Heart left ventricle (tissue), 16 donors: ENCODE measurements at regions of chr22 and their contacts with region 1.

Region 1: DNA sequence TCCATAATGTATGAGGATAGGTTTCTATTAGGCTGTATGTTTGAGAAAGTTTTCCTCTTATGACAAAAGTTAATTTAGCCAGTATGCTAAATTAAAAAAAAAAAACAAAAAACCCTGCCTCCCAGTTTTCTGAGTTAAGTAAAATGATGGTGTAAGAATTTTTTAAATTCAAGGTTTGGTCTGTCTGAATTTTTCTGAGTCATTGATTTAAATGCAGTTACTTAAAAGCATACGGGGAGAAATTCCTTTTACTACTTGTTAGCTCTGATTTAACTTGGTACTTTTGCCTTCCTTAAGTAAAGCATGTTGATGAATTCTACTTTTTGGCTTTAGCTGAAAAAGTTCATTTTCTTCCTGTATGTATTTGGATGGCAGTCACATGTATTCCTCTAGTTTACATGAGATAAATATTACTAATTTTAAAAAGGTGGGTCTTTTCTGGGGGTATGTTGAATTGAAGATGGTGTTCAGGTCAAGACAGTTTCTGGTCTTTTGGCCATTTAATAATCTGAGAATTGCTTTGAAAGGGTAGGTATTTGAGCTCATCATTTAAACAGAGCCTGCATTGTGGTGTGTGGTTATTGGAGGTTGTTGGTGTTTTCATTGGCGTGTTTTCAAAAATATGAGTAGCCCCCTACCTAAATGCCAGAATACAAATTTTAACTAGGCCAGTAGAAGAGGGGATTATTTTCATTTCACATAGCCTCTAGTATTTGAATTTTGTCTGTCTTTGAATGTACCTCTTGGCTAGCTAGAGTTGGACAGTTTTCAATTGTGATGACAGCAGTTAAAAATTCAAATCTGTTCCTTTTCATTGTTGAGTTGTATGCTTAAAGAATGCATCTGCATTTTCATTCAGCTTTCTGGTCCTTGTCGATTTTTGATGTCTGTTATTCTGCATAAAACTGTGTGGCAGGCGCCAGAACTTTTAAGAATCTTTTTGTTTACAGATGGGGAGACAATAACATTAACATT is 64.7 kb downstream of the MTMR3 start:
- DNase-seq: no peak
- ATAC-seq: peak in 1 of 4 donors; percentile 44
- H3K4me3 ChIP-seq: no peak overlapping the region
- H3K27ac ChIP-seq: peak overlapping the region in 3 of 12 donors; percentile 5 to 25 (median 16)
- H3K4me1 ChIP-seq: peaks cover 0 to 74% (median 59%) of the 10 kb centered on the region in 12 donors
- H3K27me3 ChIP-seq: no peaks in the 10 kb centered on the region
- CTCF ChIP-seq: no peak
- POLR2A ChIP-seq: no peak

Region 2: DNA sequence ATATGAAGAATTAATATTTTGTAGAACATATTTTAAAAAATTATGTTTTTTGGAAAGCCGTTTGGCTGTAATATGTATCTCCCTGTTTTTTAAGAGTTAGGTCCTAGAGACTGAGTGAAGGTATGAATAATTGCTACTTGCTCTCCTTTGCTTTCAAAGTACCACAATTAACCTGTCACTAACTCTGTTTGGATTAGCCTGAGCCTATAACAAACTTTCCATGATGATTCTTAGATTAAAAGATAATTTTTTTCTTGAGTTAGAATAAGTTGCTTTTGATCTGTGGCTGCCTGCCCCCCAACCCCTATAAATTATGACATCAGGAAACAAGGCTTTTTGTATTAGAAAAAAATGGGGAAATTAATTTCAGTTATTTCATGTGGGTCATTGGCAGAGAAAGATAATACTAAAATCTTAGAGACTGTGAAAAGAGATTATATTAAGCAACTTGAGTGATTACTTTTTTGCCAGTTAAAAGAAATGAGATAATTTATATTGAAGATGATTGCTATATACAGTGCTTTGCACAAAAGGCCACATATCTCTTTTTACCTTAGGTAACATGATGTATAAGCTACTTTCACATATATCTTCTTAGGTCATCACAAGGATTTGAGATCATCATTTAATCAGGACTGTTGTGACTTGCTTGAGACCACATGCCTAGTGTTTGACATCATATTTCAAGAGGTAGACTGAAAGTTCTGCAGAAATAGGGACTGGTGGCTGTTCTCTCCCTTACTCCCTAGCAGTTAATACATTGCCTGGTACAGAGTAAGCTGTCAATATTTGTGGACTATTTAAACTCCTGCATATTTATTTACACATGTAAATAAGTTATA is 55.2 kb before region 1 on chr22:
- intact Hi-C with region 1: loop called in 3 of 10 experiments (anchors 10 kb)
- DNase-seq: no peak
- ATAC-seq: no peak
- H3K4me3 ChIP-seq: no peak overlapping the region
- H3K27ac ChIP-seq: no peak overlapping the region
- H3K4me1 ChIP-seq: peaks cover 0 to 52% (median 32%) of the 10 kb centered on the region in 12 donors
- H3K27me3 ChIP-seq: no peaks in the 10 kb centered on the region
- CTCF ChIP-seq: no peak
- POLR2A ChIP-seq: no peak

Region 3: DNA sequence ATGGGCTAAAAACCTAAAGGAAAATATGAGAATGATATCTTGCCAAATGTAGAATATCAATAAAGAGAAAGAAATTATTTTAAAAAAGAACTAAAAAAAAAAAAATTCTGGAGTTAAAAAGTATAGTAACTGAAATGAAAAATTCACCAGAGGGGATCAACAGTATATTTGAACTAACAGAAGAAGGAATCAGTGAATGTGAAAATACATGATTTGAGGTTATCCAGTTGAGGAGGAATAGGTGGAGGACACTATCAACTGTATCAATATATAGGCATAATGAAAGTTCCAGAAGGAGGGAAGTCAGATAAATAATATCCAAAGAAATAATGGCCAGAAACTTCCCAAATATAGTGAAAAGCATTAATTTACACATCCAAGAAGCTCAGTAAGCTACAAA is 116.5 kb after region 1 on chr22:
- intact Hi-C with region 1: no loop called
- DNase-seq: no peak
- ATAC-seq: no peak
- H3K4me3 ChIP-seq: no peak overlapping the region
- H3K27ac ChIP-seq: no peak overlapping the region
- H3K4me1 ChIP-seq: no peaks in the 10 kb centered on the region
- H3K27me3 ChIP-seq: peaks cover 0 to 1% (median 0%) of the 10 kb centered on the region in 9 donors
- CTCF ChIP-seq: no peak
- POLR2A ChIP-seq: no peak